ENCODE measurements at regions of chr7 and their contacts with region 1.

Region 1: DNA sequence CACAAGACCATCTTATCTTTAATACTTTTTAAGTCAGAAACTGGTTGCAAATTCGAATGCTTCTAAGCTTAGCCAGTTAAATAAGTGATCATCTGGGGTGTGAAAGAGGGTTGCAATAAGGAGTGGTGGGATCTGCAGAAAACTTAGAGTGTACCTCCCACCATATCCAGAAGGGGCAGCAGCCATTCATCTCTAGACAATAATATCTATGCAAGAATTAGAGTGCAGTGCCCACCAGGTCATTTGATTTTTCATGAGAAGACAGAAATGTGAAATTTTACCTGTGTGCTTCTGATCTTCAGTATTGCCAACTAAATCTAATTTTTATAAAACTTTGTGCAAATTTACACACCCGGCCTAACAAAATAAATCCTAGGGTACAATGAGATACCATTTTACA is 127.2 kb upstream of the SP4 start:
- DNase-seq: no peak
- H3K4me3 Mint-ChIP-seq: no peak overlapping the region
- H3K27ac Mint-ChIP-seq: no peak overlapping the region
- H3K4me1 Mint-ChIP-seq: peaks cover 12% of the 10 kb centered on the region
- H3K27me3 Mint-ChIP-seq: no peaks in the 10 kb centered on the region

Region 2: DNA sequence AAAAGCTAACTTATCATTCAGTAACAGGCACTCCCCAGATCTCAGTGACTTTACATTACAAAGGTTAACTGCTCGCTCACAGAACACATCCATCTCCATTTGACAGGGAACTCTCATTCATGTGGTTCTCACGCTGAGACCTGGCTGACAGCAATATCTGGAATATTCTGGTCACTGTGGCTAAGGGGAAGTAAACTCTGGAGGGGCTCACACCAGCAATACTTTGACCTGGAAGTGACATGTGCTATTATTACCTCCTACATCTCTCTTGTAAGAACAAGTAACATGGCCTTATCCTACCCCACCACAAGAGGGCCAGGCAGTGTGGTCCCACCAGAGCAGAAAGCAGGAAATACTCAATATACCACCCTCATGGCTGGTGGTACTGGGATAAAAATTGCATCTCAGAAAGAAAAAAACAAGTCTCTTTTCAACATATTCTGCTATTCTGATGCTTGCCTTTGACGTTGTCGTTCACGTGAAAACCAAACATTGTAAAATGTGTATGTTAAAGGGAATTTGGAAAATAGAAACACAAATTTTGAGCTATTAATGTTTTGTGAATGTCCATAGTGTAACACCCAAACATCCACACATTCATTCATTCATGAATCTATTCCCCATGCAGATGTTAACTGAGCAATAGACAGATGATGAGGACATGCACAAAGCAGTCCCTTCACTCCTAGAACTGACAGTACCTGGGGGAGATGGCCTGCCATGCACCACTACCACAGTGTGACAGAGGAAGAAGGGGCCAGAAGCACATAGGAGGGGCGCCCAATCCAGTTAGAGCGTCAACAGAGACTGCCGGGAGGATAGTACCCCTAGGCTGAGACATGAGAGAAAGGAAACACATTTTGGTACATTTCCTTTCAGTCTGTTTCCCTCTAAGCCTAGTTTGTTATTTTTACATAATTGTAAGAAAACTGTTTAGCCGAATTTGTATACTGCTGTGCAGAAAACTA is 38.8 kb before region 1 on chr7:
- CTCF ChIA-PET with region 1: no interaction called
- intact Hi-C with region 1: loop called (anchors 2 kb)
- DNase-seq: peak; percentile 62
- H3K4me3 Mint-ChIP-seq: no peak overlapping the region
- H3K27ac Mint-ChIP-seq: no peak overlapping the region
- H3K4me1 Mint-ChIP-seq: peaks cover 7% of the 10 kb centered on the region
- H3K27me3 Mint-ChIP-seq: peaks cover 9% of the 10 kb centered on the region

Region 3: DNA sequence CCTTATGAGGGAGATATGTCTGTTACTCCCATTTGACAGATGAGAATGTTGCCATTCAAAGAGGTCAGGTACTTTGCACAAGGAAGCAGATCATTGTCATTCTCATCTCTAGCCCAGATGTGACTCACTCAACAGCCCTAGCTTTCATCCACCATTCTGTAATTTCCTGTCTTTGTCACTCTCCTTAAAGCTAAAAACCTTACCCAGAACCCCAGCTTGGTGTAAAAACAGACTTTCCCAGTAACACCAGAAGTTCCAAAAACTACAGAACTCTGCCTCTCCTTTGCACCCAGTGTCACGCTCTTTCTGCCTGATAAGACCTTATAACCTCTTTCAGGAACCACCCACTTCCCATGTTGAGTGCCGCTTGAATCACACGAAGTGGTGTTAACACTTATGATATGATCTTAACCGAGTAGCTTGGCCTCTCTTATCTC is 38.1 kb after region 1 on chr7:
- CTCF ChIA-PET with region 1: interaction called, 3 read pairs
- intact Hi-C with region 1: loop called (anchors 1 kb)
- DNase-seq: peak; percentile 80
- H3K4me3 Mint-ChIP-seq: peak overlapping the region; percentile 1
- H3K27ac Mint-ChIP-seq: peak overlapping the region; percentile 94
- H3K4me1 Mint-ChIP-seq: peaks cover 20% of the 10 kb centered on the region
- H3K27me3 Mint-ChIP-seq: no peaks in the 10 kb centered on the region

Region 4: DNA sequence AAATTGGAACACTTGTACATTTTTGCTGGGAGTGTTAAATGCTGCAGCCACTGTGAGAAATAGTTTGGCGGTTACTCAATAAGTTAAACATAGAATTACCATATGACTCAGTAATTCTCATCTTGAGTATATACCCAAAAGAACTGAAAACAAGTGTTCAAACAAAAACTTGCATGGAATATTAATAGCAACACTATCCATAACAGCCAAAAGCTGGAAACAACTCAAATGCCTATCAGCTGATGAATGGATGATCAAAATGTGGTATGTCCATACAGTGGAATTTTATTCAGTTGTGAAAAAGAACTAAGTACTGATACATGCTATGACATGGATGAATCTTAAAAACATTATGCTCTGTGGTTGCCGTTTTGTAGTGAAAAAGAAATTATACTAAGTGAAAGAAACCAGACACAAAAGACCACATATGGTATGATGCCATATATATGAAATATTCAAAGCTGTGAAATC is 64.1 kb after region 1 on chr7:
- CTCF ChIA-PET with region 1: no interaction called
- intact Hi-C with region 1: loop called (anchors 1 kb)
- DNase-seq: no peak
- H3K4me3 Mint-ChIP-seq: no peak overlapping the region
- H3K27ac Mint-ChIP-seq: no peak overlapping the region
- H3K4me1 Mint-ChIP-seq: peaks cover 27% of the 10 kb centered on the region
- H3K27me3 Mint-ChIP-seq: no peaks in the 10 kb centered on the region